SK-N-SH (cell line): ENCODE measurements at regions of chr2 and their contacts with region 1.

Region 1: GRCh38 chr2:237674731-237675276 is 47.4 kb downstream of the LRRFIP1 start:
- DNase-seq: peak; percentile 90
- H3K4me3 ChIP-seq: no peak overlapping the region; a peak in 1 of 4 replicates
- H3K27ac ChIP-seq: peak overlapping the region; percentile 76 to 92
- H3K4me1 ChIP-seq: peaks cover 35 to 51% of the 10 kb centered on the region in 2 experiments
- H3K27me3 ChIP-seq: no peaks in the 10 kb centered on the region
- CTCF ChIP-seq: no peak
- EP300 ChIP-seq: no peak
- RAD21 ChIP-seq: peak; percentile 36; the same call in 1 of the 2 replicates

Region 2: GRCh38 chr2:237456200-237456843 is 218.5 kb before region 1 on chr2:
- CTCF ChIA-PET with region 1: no interaction called
- POLR2A ChIA-PET with region 1: no interaction called
- DNase-seq: no peak
- H3K4me3 ChIP-seq: no peak overlapping the region
- H3K27ac ChIP-seq: peak overlapping the region in 1 of 2 experiments; percentile 41; a peak in 2 of 4 replicates
- H3K4me1 ChIP-seq: peaks cover 0 to 16% of the 10 kb centered on the region in 2 experiments; a peak in 1 of 4 replicates
- H3K27me3 ChIP-seq: no peaks in the 10 kb centered on the region
- CTCF ChIP-seq: no peak
- EP300 ChIP-seq: no peak
- RAD21 ChIP-seq: no peak

Region 3: DNA sequence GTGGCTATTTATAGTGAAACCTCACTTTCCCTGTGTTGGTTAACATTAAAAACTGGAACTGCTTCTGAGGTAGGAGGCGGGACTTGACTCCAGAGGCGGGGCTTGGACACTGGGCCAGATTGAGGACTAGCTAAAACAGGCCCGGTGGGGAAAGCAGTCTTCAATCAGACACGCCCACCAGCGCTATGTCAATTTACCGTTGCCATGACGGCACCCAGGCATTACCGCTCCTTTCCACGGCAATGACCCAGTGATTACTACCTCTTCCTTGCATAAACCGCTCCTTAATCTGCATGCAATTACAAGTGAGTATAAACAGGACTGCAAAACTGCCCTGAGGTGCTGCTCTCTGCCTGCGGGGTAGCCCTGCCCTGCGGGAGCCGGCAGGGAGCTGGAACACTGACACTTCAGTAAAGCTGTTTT is 12.1 kb before region 1 on chr2:
- CTCF ChIA-PET with region 1: interaction called, 12 read pairs
- POLR2A ChIA-PET with region 1: no interaction called
- DNase-seq: peak; percentile 63
- H3K4me3 ChIP-seq: no peak overlapping the region
- H3K27ac ChIP-seq: peak overlapping the region in 1 of 2 experiments; percentile 21; a peak in 1 of 4 replicates
- H3K4me1 ChIP-seq: peaks cover 8 to 21% of the 10 kb centered on the region in 2 experiments; a peak in 2 of 4 replicates
- H3K27me3 ChIP-seq: no peaks in the 10 kb centered on the region
- CTCF ChIP-seq: no peak
- EP300 ChIP-seq: no peak
- RAD21 ChIP-seq: no peak

Region 4: GRCh38 chr2:237700512-237701032 is 25.8 kb after region 1 on chr2:
- CTCF ChIA-PET with region 1: interaction called, 11 read pairs
- POLR2A ChIA-PET with region 1: no interaction called
- DNase-seq: peak; percentile 44
- H3K4me3 ChIP-seq: no peak overlapping the region
- H3K27ac ChIP-seq: peak overlapping the region; percentile 92 to 95
- H3K4me1 ChIP-seq: peaks cover 61 to 92% of the 10 kb centered on the region in 2 experiments
- H3K27me3 ChIP-seq: no peaks in the 10 kb centered on the region
- CTCF ChIP-seq: no peak
- EP300 ChIP-seq: no peak
- RAD21 ChIP-seq: no peak

Region 5: GRCh38 chr2:237731663-237732062 is 56.9 kb after region 1 on chr2:
- CTCF ChIA-PET with region 1: interaction called, 45 read pairs
- POLR2A ChIA-PET with region 1: no interaction called
- DNase-seq: peak; percentile 64
- H3K4me3 ChIP-seq: no peak overlapping the region
- H3K27ac ChIP-seq: peak overlapping the region; percentile 6 to 58
- H3K4me1 ChIP-seq: peaks cover 35 to 46% of the 10 kb centered on the region in 2 experiments; a peak in 3 of 4 replicates
- H3K27me3 ChIP-seq: no peaks in the 10 kb centered on the region
- CTCF ChIP-seq: no peak
- EP300 ChIP-seq: no peak; a peak in 1 of 4 replicates
- RAD21 ChIP-seq: no peak